A673 (cell line): ENCODE measurements at regions of chr7 and their contacts with region 1.

Region 1: GRCh38 chr7:141975806-141976523 is 2.4 kb upstream of the TAS2R38 start:
- DNase-seq: peak; percentile 77
- H3K4me3 ChIP-seq: no peak overlapping the region
- H3K27ac ChIP-seq: no peak overlapping the region
- H3K4me1 ChIP-seq: no peaks in the 10 kb centered on the region
- H3K27me3 ChIP-seq: no peaks in the 10 kb centered on the region
- CTCF ChIP-seq: peak; percentile 91

Region 2: GRCh38 chr7:142188846-142189245 is 212.9 kb after region 1 on chr7:
- CTCF ChIA-PET with region 1: interaction called, 3 read pairs
- POLR2A ChIA-PET with region 1: no interaction called
- intact Hi-C with region 1: loop called (anchors 2 kb)
- DNase-seq: peak; percentile 15
- H3K4me3 ChIP-seq: no peak overlapping the region
- H3K27ac ChIP-seq: no peak overlapping the region
- H3K4me1 ChIP-seq: no peaks in the 10 kb centered on the region
- H3K27me3 ChIP-seq: peaks cover 3% of the 10 kb centered on the region
- CTCF ChIP-seq: peak; percentile 35; the same call in 1 of the 2 replicates

Region 3: GRCh38 chr7:142301923-142302550 is 326.1 kb after region 1 on chr7:
- CTCF ChIA-PET with region 1: no interaction called
- POLR2A ChIA-PET with region 1: no interaction called
- intact Hi-C with region 1: loop called (anchors 10 kb)
- DNase-seq: peak; percentile 26
- H3K4me3 ChIP-seq: no peak overlapping the region
- H3K27ac ChIP-seq: no peak overlapping the region
- H3K4me1 ChIP-seq: no peaks in the 10 kb centered on the region
- H3K27me3 ChIP-seq: peaks cover 8% of the 10 kb centered on the region
- CTCF ChIP-seq: peak; percentile 57